ENCODE measurements at regions of chr11 and their contacts with region 1.

Region 1: GRCh38 chr11:120613264-120614226 is 102.0 kb downstream of the GRIK4 start:
- DNase-seq: no peak
- H3K4me3 ChIP-seq: no peak overlapping the region
- H3K27ac ChIP-seq: no peak overlapping the region
- H3K4me1 ChIP-seq: no peaks in the 10 kb centered on the region
- CTCF ChIP-seq: no peak

Region 2: GRCh38 chr11:120547811-120548681 is 65.5 kb before region 1 on chr11:
- CTCF ChIA-PET with region 1: no interaction called
- POLR2A ChIA-PET with region 1: no interaction called
- intact Hi-C with region 1: no loop called
- DNase-seq: no peak
- H3K4me3 ChIP-seq: no peak overlapping the region
- H3K27ac ChIP-seq: no peak overlapping the region
- H3K4me1 ChIP-seq: no peaks in the 10 kb centered on the region
- CTCF ChIP-seq: no peak

Region 3: GRCh38 chr11:120625565-120625964 is 12.0 kb after region 1 on chr11:
- CTCF ChIA-PET with region 1: no interaction called
- POLR2A ChIA-PET with region 1: no interaction called
- intact Hi-C with region 1: no loop called
- DNase-seq: no peak
- H3K4me3 ChIP-seq: no peak overlapping the region
- H3K27ac ChIP-seq: no peak overlapping the region
- H3K4me1 ChIP-seq: peaks cover 6% of the 10 kb centered on the region
- CTCF ChIP-seq: no peak

Region 4: DNA sequence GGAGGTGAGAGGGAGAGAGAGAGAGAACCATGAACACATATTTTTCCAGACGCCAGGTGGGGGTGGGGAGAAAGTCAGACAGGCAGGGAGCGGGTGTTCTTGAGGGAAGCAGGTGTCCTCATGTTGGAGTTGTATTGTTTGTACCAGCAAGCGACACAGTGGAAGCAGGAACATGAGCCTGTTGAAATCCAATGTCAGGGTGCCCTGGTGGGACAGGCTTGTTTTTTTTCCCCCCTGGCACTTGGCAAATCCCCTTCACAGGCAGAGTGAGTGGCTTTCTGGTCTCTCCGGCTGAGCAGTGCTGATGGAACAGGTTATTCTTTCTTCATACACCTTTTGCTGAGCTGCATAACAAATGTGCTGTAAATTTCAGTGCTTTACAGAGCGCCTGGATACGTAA is 23.6 kb after region 1 on chr11:
- CTCF ChIA-PET with region 1: no interaction called
- POLR2A ChIA-PET with region 1: interaction called, 11 read pairs
- intact Hi-C with region 1: no loop called
- DNase-seq: no peak
- H3K4me3 ChIP-seq: no peak overlapping the region
- H3K27ac ChIP-seq: no peak overlapping the region
- H3K4me1 ChIP-seq: no peaks in the 10 kb centered on the region
- CTCF ChIP-seq: no peak

Region 5: DNA sequence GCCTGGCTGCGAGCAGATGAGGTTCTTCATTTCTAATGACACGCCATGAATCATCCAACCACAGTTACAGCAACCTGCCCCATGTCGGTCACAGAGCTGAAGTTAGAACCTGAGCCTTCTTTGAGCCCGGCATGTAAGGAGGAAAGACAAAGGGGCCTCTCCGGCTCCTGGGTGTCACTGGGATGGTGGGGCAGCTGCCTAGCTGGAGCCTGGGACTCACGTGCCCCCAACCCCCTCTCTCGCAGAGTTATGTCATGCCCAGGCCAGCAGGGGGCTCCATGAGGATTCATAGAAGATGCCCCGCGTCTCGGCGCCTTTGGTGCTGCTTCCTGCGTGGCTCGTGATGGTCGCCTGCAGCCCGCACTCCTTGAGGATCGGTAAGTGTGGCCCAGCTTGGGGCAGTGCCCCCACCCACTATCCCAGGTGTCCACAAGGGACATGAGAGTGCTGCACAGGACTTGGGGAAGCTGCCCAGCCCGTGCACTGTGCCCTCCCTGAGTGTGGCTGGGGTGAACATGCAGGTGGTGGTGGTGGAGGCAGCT is 46.5 kb after region 1 on chr11:
- CTCF ChIA-PET with region 1: no interaction called
- POLR2A ChIA-PET with region 1: no interaction called
- intact Hi-C with region 1: no loop called
- DNase-seq: peak; percentile 82
- H3K4me3 ChIP-seq: no peak overlapping the region
- H3K27ac ChIP-seq: no peak overlapping the region
- H3K4me1 ChIP-seq: peaks cover 33% of the 10 kb centered on the region
- CTCF ChIP-seq: peak; percentile 84

Measured in OCI-LY7 (cell line).